ENCODE measurements at regions of chr6 and their contacts with region 1.

Region 1: GRCh38 chr6:152267967-152268845 is 369.0 kb downstream of the SYNE1 start:
- DNase-seq: no peak
- H3K4me3 Mint-ChIP-seq: no peak overlapping the region
- H3K27ac Mint-ChIP-seq: no peak overlapping the region
- H3K4me1 Mint-ChIP-seq: peaks cover 8% of the 10 kb centered on the region
- H3K27me3 Mint-ChIP-seq: no peaks in the 10 kb centered on the region

Region 2: DNA sequence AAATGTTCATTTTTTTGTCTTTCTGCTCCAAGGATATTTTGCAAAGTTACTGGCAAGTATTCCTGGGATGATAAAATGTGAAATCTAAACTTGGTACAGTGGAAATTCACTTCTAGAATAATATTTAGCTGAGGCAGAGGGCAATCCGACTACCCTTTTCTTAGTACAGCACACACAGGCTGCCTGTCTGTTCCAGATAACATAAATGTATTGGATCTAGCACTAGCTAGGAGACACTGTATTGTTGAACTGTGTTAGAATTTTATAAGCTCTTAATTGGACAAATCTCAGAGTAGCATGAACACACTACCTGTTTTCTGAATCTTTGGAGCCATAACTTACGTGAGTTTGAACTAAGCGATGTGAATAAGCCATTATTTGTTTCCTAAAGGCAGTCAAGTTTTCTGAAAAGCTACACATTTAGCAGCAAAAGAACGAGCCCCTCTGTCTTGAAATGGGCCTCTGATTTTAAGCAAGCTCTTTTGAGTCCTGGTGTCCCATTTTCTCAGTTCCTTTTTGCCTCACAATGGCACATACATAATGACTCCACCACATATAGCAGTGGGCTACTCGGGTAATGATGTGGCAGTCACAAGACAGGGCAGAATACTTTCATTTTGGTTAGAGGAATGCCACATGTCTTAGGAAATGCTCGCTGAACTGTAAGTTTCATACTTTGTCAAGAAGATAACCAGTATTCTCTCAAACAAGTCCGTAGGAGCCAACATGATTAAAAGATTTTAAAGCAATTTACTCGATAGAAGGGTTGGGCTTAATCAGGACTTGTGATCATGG is 577.2 kb before region 1 on chr6:
- intact Hi-C with region 1: loop called (anchors 1 kb)
- DNase-seq: peak; percentile 45
- H3K4me3 Mint-ChIP-seq: peak overlapping the region; percentile 78
- H3K27ac Mint-ChIP-seq: peak overlapping the region; percentile 64
- H3K4me1 Mint-ChIP-seq: peaks cover 30% of the 10 kb centered on the region
- H3K27me3 Mint-ChIP-seq: peaks cover 10% of the 10 kb centered on the region

Region 3: GRCh38 chr6:151962246-151962846 is 305.9 kb before region 1 on chr6:
- intact Hi-C with region 1: loop called (anchors 10 kb)
- DNase-seq: peak; percentile 25
- H3K4me3 Mint-ChIP-seq: no peak overlapping the region
- H3K27ac Mint-ChIP-seq: peak overlapping the region; percentile 64
- H3K4me1 Mint-ChIP-seq: peaks cover 22% of the 10 kb centered on the region
- H3K27me3 Mint-ChIP-seq: peaks cover 36% of the 10 kb centered on the region

Region 4: GRCh38 chr6:152206072-152206818 is 62.0 kb before region 1 on chr6:
- intact Hi-C with region 1: loop called (anchors 2 kb)
- DNase-seq: no peak
- H3K4me3 Mint-ChIP-seq: no peak overlapping the region
- H3K27ac Mint-ChIP-seq: no peak overlapping the region
- H3K4me1 Mint-ChIP-seq: no peaks in the 10 kb centered on the region
- H3K27me3 Mint-ChIP-seq: no peaks in the 10 kb centered on the region

Region 5: DNA sequence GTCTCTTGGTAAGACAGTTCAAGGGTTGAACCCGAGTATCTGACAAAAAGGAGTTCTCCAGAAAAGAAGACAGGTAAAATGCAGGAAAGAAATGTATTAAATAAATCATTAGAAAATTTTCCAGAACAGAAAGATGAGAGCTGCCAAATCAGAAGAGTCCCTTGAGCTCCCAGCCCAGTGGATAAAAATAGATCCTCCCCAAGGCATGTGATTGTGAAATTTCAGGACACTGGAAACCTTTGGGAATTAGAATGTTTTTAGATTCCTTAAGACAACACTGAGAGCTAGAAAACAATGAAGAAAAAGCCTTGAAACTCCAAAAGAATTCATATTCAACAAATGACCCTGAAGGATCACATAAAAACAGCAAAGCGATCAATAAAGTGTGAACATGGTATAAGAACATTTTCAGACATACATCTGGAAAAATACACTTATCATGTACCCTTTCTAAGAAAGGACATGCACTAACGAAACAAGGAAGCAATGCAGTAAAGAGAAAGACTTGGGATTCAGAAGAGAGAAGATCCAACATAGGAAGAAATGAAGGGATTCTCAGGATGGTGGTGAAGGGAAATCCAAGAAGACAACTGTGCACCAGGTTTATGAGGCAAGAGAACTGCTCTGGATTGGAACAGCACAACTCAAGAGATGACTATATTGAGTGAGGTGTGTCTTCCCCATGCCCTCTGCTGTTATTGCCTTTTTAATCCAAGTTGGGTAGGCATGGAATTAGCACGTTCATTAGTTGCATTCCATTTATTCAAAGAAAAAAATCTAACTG is 21.5 kb before region 1 on chr6:
- intact Hi-C with region 1: no loop called
- DNase-seq: no peak
- H3K4me3 Mint-ChIP-seq: no peak overlapping the region
- H3K27ac Mint-ChIP-seq: no peak overlapping the region
- H3K4me1 Mint-ChIP-seq: no peaks in the 10 kb centered on the region
- H3K27me3 Mint-ChIP-seq: no peaks in the 10 kb centered on the region

Region 6: DNA sequence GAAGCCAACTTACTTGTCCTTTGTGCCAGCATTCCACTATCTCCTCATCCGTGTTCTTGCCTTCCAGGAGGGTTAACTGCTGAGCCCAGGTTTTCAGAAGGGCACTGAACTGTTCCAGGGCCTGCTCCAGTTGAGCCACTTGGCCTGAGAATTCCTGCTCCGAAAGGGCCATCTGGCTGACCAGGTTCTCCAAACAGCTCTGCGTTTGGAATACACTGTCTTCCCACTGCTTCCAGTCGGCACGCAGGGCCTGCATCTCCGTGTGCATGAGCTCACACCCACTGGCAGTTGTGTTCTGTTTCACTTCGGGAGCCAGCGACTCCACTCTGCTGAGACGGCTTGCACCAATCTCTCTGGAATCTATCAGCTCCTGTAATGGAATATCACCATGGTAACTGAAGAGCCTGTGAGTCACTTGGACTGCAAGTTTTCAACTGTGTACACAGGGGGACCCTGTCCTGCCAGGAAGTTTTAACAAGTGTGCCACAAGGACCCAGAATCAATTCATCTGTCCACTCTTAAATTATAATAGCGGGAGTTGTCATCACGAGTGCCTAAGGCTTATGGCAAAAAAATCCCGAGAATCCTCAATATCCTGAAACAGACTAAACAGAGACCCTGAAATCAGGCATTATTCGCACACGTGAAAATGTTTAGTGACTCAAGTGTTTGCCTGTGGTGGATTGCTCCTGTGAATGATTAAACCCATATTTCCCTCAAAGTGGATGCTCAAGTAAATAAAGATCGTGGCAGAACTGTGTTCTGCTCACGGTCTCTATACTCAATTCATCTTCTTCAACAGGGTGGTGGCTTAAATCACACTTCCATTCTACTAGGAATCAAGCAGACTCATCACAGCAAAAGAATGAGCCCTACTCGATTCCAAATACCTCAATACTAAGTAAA is 113.0 kb after region 1 on chr6:
- intact Hi-C with region 1: no loop called
- DNase-seq: no peak
- H3K4me3 Mint-ChIP-seq: no peak overlapping the region
- H3K27ac Mint-ChIP-seq: no peak overlapping the region
- H3K4me1 Mint-ChIP-seq: no peaks in the 10 kb centered on the region
- H3K27me3 Mint-ChIP-seq: peaks cover 6% of the 10 kb centered on the region

Measured in activated T-helper 1 cell treated with anti-CD3 and anti-CD28 coated beads, Interleukin-12 subunit alpha, Interleukin-12 subunit beta, Interleukin-2, Interleukin-4 antibody, amounts not matched to agents 30 ng/mL and 10 ng/mL and 1 ng/mL, durations not matched to agents 14 hours and 24 hours and 36 hours (primary cell).